MCF 10A (cell line): ENCODE measurements at regions of chr5 and their contacts with region 1.

Region 1: GRCh38 chr5:174532455-174533453 is 191.6 kb upstream of the MSX2 start:
- DNase-seq: peak; percentile 99
- H3K4me3 Mint-ChIP-seq: peak overlapping the region; percentile 13
- H3K27ac Mint-ChIP-seq: peak overlapping the region; percentile 40
- H3K4me1 Mint-ChIP-seq: peaks cover 46% of the 10 kb centered on the region
- H3K27me3 Mint-ChIP-seq: no peaks in the 10 kb centered on the region
- CTCF ChIP-seq: no peak

Region 2: GRCh38 chr5:174371595-174372128 is 161.1 kb before region 1 on chr5:
- CTCF ChIA-PET with region 1: no interaction called
- POLR2A ChIA-PET with region 1: no interaction called
- intact Hi-C with region 1: no loop called
- DNase-seq: peak; percentile 50
- H3K4me3 Mint-ChIP-seq: no peak overlapping the region
- H3K27ac Mint-ChIP-seq: no peak overlapping the region
- H3K4me1 Mint-ChIP-seq: peaks cover 6% of the 10 kb centered on the region
- H3K27me3 Mint-ChIP-seq: no peaks in the 10 kb centered on the region
- CTCF ChIP-seq: no peak

Region 3: GRCh38 chr5:174503461-174504265 is 29.1 kb before region 1 on chr5:
- CTCF ChIA-PET with region 1: interaction called, 5 read pairs
- POLR2A ChIA-PET with region 1: interaction called, 6 read pairs
- intact Hi-C with region 1: loop called (anchors 1 kb)
- DNase-seq: peak; percentile 93
- H3K4me3 Mint-ChIP-seq: peak overlapping the region; percentile 58
- H3K27ac Mint-ChIP-seq: peak overlapping the region; percentile 5
- H3K4me1 Mint-ChIP-seq: peaks cover 49% of the 10 kb centered on the region
- H3K27me3 Mint-ChIP-seq: no peaks in the 10 kb centered on the region
- CTCF ChIP-seq: no peak

Region 4: DNA sequence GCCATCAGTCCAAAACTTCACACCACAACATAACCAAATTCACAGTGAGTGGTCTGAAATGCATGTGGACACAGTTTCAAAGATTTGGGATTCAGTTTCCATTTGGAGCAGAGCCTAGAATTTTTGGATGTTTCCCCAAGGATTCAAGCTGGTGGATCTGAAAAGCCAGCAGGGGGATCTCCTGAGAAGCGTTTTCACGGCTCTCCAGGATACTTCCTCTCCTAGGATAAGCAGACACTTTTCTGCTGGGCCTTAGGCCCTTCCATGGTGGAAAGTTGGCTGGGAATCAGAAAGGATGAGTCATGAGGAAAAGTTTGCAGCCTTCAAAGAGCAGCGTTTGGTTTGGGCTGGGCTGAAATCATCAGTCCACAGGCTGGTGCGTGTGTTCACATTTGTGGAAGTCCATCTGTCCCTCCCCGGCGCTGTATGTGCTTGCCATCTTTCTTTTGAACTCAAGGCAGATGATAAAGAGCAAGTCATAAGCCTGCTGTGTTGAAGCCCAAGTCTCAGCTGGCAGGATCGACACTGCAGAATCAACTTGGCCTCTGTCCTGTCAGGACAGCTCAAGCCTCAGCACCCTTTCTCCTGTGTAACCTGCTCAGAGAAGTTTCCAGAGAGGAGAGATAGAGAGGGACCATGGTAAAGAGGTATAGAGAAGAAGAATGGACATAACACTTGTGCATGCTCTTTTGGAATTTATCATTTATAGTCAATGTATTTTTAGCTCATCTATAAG is 39.1 kb after region 1 on chr5:
- CTCF ChIA-PET with region 1: no interaction called
- POLR2A ChIA-PET with region 1: no interaction called
- intact Hi-C with region 1: loop called (anchors 2 kb)
- DNase-seq: peak; percentile 99
- H3K4me3 Mint-ChIP-seq: no peak overlapping the region
- H3K27ac Mint-ChIP-seq: no peak overlapping the region
- H3K4me1 Mint-ChIP-seq: peaks cover 21% of the 10 kb centered on the region
- H3K27me3 Mint-ChIP-seq: no peaks in the 10 kb centered on the region
- CTCF ChIP-seq: peak; percentile 22

Region 5: DNA sequence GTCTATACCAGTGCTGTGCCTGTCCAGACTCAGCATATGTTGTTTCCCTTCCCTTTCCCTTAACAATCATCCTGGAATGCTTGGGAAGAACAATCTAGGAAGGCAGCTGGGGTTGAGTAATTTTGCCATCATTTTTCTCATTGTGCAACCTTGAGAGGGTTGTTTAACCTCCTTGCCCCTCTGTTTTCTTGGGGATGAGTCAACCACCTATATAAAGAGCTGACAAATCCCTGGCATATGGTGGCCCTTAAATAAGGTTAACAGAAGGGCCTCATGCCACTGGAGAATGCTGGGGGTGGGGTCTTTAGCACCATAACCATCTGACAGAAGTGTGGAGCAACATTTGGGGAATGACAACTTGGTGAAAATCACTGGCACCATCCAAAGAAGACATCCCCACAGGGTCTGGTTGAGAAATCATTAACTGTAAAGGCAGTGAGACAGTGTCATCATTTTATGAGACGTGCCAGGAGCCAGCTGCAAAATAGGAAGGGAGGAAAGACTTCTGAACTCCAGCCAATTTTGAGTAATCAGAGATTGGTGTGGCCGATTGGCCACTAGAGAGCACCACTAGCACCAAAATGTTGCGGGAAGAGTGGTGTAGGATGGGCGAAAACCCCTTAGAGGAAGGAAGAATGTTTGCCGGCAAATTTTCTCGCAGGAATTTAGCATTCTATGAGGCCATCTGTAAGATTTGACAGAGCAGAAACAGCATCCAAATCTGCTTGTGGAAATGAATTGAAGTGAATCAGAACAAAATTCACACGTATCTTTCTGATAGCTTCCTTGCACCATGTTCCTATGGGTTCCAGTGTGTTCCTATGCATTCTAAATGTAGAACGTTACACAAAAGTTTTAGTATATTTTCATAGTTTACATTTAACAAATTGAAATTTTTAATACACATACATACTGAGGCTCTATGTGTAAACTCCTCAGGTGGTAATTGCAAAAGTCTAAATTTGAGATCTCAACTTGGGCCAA is 305.5 kb after region 1 on chr5:
- CTCF ChIA-PET with region 1: no interaction called
- POLR2A ChIA-PET with region 1: no interaction called
- intact Hi-C with region 1: loop called (anchors 10 kb)
- DNase-seq: peak; percentile 99
- H3K4me3 Mint-ChIP-seq: no peak overlapping the region
- H3K27ac Mint-ChIP-seq: peak overlapping the region; percentile 65
- H3K4me1 Mint-ChIP-seq: peaks cover 20% of the 10 kb centered on the region
- H3K27me3 Mint-ChIP-seq: no peaks in the 10 kb centered on the region
- CTCF ChIP-seq: peak; percentile 43